HEK293 (cell line): ENCODE measurements at regions of chr11 and their contacts with region 1.

Region 1: DNA sequence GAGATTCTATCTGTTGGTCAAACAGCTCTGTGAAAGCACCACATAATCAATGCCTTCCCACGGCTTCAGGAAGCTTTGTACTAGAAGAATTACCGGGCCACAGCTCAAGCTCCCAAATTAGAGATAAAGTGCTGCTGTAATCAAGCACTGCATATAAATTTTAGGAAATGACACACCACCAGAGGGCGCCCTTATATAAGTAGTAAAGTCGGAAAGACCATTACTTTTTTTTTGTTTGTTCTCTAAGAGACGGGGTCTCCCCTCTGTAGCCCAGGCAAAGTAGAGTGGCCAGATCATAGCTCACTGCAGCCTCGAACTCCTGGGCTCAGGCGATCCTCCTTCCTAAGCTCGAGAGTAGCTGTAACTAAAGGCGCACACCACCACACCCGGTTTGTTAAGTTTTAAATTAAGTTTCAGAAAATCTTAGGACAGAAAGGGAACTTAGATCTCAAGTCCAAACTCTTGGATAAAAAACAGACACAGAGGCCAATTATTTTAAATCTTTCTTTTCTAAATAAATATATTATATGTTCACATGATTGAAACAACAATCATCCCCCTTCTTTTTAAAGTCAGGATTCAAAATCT is 32.6 kb downstream of the PRCP start:
- H3K4me3 ChIP-seq: no peak overlapping the region
- H3K27ac ChIP-seq: no peak overlapping the region
- H3K4me1 ChIP-seq: no peaks in the 10 kb centered on the region; the same call in 1 of the 2 replicates
- CTCF ChIP-seq: no peak

Region 2: GRCh38 chr11:82356316-82356715 is 511.3 kb before region 1 on chr11:
- CTCF ChIA-PET with region 1: no interaction called
- POLR2A ChIA-PET with region 1: no interaction called
- H3K4me3 ChIP-seq: no peak overlapping the region
- H3K27ac ChIP-seq: no peak overlapping the region
- H3K4me1 ChIP-seq: no peaks in the 10 kb centered on the region
- CTCF ChIP-seq: no peak

Region 3: GRCh38 chr11:82718307-82718706 is 149.3 kb before region 1 on chr11:
- CTCF ChIA-PET with region 1: interaction called, 27 read pairs
- POLR2A ChIA-PET with region 1: no interaction called
- H3K4me3 ChIP-seq: no peak overlapping the region
- H3K27ac ChIP-seq: no peak overlapping the region
- H3K4me1 ChIP-seq: no peaks in the 10 kb centered on the region
- CTCF ChIP-seq: no peak

Region 4: DNA sequence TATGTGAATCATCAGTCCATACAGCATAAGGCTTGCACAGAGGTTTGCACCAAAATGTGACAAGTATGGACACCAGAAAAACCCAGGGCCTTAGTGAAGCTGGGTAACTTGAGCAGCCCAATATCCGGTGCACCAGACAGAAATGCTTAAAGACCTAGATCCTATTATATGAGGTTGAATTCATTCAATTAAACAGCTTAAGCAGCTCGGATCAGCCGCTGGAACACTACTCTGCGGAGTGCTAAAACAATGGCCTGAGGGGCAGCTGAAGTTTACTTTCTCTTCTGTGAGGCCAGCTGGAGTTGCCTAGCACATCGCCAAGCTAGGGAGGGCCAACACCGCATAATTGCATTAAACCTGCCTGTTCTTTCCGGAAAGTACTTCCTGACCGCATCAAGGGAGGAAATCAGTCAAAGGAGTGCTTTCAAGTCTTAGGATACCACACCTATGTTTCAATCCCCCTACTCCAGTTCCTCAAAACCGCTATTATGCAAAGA is 116.9 kb before region 1 on chr11:
- CTCF ChIA-PET with region 1: no interaction called
- POLR2A ChIA-PET with region 1: no interaction called
- H3K4me3 ChIP-seq: no peak overlapping the region
- H3K27ac ChIP-seq: no peak overlapping the region
- H3K4me1 ChIP-seq: no peaks in the 10 kb centered on the region
- CTCF ChIP-seq: no peak

Region 5: GRCh38 chr11:82796998-82797964 is 70.3 kb before region 1 on chr11:
- CTCF ChIA-PET with region 1: no interaction called
- POLR2A ChIA-PET with region 1: no interaction called
- H3K4me3 ChIP-seq: no peak overlapping the region
- H3K27ac ChIP-seq: no peak overlapping the region
- H3K4me1 ChIP-seq: no peaks in the 10 kb centered on the region
- CTCF ChIP-seq: no peak

Region 6: DNA sequence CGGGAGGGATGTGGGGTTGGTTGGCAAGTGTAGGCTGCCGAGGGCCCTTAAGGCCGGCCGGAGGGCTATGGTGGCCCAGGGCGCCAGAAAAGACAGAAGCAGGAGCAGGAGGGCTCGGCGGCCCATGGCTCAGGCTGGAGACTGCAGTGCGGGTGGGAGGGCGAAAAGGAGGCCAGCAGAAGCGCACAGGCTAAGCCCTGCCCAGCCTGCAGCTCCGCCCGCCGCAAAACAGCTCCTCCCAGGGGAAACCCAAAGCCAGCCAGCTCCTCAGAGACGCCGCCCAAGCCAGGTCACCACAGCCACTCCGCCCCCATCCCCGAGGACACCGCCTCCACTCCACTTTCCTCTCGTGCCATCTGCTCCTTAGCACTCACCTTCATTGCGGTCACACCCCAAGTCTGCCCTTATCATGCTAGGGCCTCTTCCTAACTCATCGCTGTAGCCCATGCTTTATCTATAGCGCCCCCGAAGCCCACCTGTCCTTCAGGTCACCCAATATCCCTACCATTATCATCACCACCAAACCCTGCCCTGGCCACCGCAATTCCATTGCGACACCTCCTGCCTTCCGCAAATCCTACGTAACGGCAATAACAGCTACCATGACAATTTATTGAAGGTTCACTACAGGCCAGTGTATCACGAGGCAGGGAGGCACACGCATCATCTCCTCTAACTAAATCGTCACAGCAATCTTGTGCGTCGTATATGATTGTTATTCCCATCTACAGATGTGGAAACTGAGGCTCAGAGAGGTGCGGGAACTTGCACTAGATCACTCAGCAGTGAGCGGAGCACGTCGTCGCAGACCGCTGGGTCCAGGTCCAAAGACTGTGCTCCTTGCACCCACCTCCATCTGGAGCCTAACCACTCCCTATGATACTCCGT is 32.9 kb after region 1 on chr11 and contains the start of gene PRCP:
- CTCF ChIA-PET with region 1: interaction called, 69 read pairs
- POLR2A ChIA-PET with region 1: interaction called, 30 read pairs
- H3K4me3 ChIP-seq: peak within 1 kb of the TSS; percentile 53
- H3K27ac ChIP-seq: peak within 1 kb of the TSS; percentile 57; the same call in 1 of the 2 replicates
- H3K4me1 ChIP-seq: peaks cover 4% of the 10 kb centered on the region; the same call in 1 of the 2 replicates
- CTCF ChIP-seq: peak; percentile 74

Region 7: DNA sequence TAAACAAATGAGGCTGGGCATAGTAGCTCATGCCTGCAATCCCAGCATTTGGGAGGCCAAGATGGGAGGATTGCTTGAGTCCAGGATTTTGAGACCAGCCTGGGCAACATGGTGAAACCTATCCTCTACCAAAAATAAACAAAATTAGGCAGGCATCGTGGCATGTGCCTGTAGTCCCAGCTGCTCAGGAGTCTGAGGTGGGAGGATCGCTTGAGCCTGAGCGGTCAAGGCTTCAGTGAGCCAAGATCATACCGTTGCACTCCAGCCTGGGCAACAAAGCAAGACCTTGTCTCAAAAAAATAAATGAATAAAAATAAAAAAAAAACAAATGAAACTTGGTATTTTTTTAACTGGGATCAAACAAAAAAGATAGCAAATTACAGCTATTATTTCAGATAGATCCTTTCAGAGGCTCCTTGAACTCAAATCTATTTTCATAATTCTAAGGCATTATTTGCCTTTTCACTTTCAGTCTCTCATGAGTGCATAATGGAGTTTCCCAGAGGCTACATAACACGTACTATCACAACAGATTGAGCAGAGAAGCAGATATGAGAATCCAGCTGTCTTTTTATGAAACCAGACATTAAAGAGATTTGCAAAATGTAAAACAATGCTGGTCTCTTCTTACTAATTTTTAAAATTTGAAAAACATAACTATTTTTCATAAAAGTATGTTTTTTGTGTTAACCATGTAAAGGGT is 57.1 kb after region 1 on chr11:
- CTCF ChIA-PET with region 1: interaction called, 19 read pairs
- POLR2A ChIA-PET with region 1: no interaction called
- H3K4me3 ChIP-seq: no peak overlapping the region
- H3K27ac ChIP-seq: no peak overlapping the region
- H3K4me1 ChIP-seq: no peaks in the 10 kb centered on the region
- CTCF ChIP-seq: no peak

Region 8: DNA sequence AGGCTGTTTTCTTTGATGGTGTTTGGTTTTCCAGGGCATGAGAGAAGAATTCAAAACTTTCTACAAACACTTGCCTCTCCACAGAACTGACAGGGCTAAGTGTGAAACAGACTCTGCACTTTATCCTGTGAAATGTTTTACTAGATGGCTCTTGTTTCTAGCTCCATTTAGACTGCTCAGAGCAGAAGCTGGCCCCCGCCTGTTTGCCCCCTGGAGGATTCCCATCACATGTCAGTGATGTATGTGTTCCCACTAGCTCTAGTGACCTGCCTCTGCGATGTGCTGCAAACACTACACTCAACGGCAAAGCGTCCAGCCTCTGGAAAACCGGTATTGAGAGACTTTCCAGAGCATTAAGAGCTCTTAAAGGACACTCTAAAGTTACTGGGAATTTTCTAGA is 248.0 kb after region 1 on chr11:
- CTCF ChIA-PET with region 1: no interaction called
- POLR2A ChIA-PET with region 1: no interaction called
- H3K4me3 ChIP-seq: no peak overlapping the region
- H3K27ac ChIP-seq: no peak overlapping the region
- H3K4me1 ChIP-seq: no peaks in the 10 kb centered on the region; the same call in 1 of the 2 replicates
- CTCF ChIP-seq: no peak

Region 9: DNA sequence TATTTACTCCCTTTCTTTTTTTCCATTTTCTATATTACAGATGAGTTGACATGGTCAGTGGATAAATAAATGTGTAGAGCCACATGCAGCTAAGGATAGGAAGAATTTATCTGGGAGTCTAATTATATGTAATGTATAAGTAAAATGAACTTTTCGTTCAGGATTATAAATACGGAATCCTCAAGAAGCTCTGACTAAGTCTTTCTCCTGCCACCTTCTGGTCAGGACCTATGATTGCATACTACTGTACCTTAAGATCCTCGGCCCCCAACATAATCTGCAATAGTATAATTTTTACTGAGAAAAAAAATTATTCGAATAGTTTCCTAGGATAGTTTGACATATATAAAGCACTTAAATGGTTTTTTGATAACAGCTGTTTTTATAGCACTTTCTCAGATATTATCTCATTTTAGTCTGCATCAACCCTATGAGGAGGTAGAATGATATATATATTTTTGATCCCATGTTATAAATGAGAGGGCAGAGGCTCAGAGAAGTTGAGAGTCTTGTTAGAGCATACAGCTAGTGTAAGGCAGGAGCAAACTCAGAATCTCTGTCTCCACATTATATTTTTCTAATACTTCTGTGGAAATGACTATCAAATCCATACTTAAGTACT is 382.5 kb after region 1 on chr11:
- CTCF ChIA-PET with region 1: interaction called, 34 read pairs
- POLR2A ChIA-PET with region 1: no interaction called
- H3K4me3 ChIP-seq: no peak overlapping the region
- H3K27ac ChIP-seq: no peak overlapping the region
- H3K4me1 ChIP-seq: no peaks in the 10 kb centered on the region
- CTCF ChIP-seq: no peak